ENCODE measurements at regions of chr3 and their contacts with region 1.

Region 1: DNA sequence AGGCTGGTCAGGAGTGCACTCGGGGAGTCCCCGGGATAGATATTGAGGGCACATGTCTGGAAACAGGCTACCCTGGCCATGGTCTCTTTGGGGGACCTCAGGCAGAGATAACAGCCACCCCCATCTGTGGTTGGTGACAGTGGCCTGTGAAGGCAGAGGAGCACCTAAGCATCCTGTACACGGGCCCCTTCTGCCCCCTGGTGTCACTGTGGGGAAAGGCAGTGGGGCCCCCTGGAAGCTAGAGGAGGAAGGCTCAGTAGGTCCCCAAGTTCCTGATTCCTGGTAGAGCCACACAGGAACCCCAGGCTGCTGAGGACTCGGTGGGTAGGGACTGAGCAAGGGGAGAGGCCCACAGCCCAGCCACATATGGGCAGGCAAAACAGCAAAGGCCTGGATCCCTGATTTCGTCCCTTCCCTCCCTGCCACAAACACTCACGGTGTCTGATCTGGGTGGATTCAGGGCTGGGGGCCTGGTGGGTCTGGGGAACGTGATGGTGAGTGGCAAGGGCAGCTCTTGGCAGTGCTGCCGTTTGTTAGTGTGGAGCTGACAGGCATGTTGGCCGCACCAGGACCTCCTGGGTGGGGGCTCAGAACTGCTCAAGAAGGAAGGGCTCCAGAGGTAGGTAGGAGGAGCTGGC is 14.1 kb upstream of the CXCR6 start:
- DNase-seq: peak; percentile 38 to 68
- H3K4me3 ChIP-seq: no peak overlapping the region
- H3K4me3 Mint-ChIP-seq: no peak overlapping the region
- H3K27ac Mint-ChIP-seq: no peak overlapping the region
- H3K4me1 ChIP-seq: no peaks in the 10 kb centered on the region
- H3K4me1 Mint-ChIP-seq: no peaks in the 10 kb centered on the region
- H3K27me3 ChIP-seq: no peaks in the 10 kb centered on the region
- H3K27me3 Mint-ChIP-seq: no peaks in the 10 kb centered on the region
- CTCF ChIP-seq: peak; percentile 59 to 82

Region 2: DNA sequence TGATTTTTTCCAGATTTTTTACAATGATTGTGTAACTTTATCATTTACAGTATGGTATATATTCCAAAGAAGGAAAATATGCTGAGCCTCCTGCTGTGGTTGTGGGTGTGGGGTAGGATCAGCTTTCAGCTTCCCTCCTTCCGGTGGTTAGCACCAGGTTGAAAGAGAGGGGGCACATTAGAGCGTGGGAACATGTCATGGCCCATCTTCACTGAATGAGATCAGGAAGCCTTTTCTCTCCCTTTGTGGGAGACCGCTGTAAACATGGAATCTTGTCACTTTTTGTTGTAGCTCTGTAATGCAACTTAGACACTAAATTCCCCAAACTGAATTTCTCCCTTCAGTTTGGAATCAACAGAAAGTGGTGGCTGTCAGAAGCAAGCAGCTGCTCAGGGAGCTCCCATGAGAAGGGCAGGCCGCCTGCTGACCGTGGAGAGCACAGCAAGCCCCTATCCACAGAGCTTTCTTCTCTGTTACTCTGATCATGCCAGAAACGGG is 421.3 kb before region 1 on chr3:
- CTCF ChIA-PET with region 1: no interaction called
- POLR2A ChIA-PET with region 1: interaction called, 5 read pairs
- intact Hi-C with region 1: loop called (anchors 5 kb)
- DNase-seq: peak in 1 of 2 experiments; percentile 15
- H3K4me3 ChIP-seq: no peak overlapping the region
- H3K4me3 Mint-ChIP-seq: no peak overlapping the region
- H3K27ac Mint-ChIP-seq: no peak overlapping the region
- H3K4me1 ChIP-seq: no peaks in the 10 kb centered on the region
- H3K4me1 Mint-ChIP-seq: peaks cover 6% of the 10 kb centered on the region
- H3K27me3 ChIP-seq: no peaks in the 10 kb centered on the region
- H3K27me3 Mint-ChIP-seq: no peaks in the 10 kb centered on the region
- CTCF ChIP-seq: peak in 1 of 2 experiments; percentile 24

Region 3: GRCh38 chr3:45760878-45761711 is 168.1 kb before region 1 on chr3:
- CTCF ChIA-PET with region 1: interaction called, 12 read pairs
- POLR2A ChIA-PET with region 1: interaction called, 9 read pairs
- intact Hi-C with region 1: loop called (anchors 1 kb)
- DNase-seq: peak; percentile 64 to 66
- H3K4me3 ChIP-seq: no peak overlapping the region
- H3K4me3 Mint-ChIP-seq: no peak overlapping the region
- H3K27ac Mint-ChIP-seq: peak overlapping the region; percentile 60
- H3K4me1 ChIP-seq: peaks cover 13% of the 10 kb centered on the region
- H3K4me1 Mint-ChIP-seq: peaks cover 17% of the 10 kb centered on the region
- H3K27me3 ChIP-seq: no peaks in the 10 kb centered on the region
- H3K27me3 Mint-ChIP-seq: no peaks in the 10 kb centered on the region
- CTCF ChIP-seq: peak; percentile 67 to 80

Region 4: GRCh38 chr3:45807681-45808540 is 121.2 kb before region 1 on chr3:
- CTCF ChIA-PET with region 1: no interaction called
- POLR2A ChIA-PET with region 1: no interaction called
- intact Hi-C with region 1: no loop called
- DNase-seq: no peak
- H3K4me3 ChIP-seq: no peak overlapping the region
- H3K4me3 Mint-ChIP-seq: no peak overlapping the region
- H3K27ac Mint-ChIP-seq: no peak overlapping the region
- H3K4me1 ChIP-seq: no peaks in the 10 kb centered on the region
- H3K4me1 Mint-ChIP-seq: no peaks in the 10 kb centered on the region
- H3K27me3 ChIP-seq: no peaks in the 10 kb centered on the region
- H3K27me3 Mint-ChIP-seq: no peaks in the 10 kb centered on the region
- CTCF ChIP-seq: no peak

Region 5: GRCh38 chr3:45841757-45842491 is 87.2 kb before region 1 on chr3 and contains the start of gene LZTFL1:
- CTCF ChIA-PET with region 1: no interaction called
- POLR2A ChIA-PET with region 1: no interaction called
- intact Hi-C with region 1: loop called (anchors 5 kb)
- DNase-seq: peak; percentile 92 to 95
- H3K4me3 ChIP-seq: peak within 1 kb of the TSS; percentile 66
- H3K4me3 Mint-ChIP-seq: peak within 1 kb of the TSS; percentile 86
- H3K27ac Mint-ChIP-seq: peak within 1 kb of the TSS; percentile 87
- H3K4me1 ChIP-seq: no peaks in the 10 kb centered on the region
- H3K4me1 Mint-ChIP-seq: peaks cover 6% of the 10 kb centered on the region
- H3K27me3 ChIP-seq: no peaks in the 10 kb centered on the region
- H3K27me3 Mint-ChIP-seq: peaks cover 15% of the 10 kb centered on the region
- CTCF ChIP-seq: no peak
- total RNA-seq, gene LZTFL1: 8.0 and 9.1 TPM in 2 replicates

Measured in Caco-2 (cell line).